Gastrocnemius medialis (tissue), 4 donors: ENCODE measurements at regions of chr13 and their contacts with region 1.

Region 1: GRCh38 chr13:79541426-79542049 is 60.6 kb downstream of the NDFIP2 start:
- DNase-seq: no peak
- ATAC-seq: no peak
- H3K4me3 ChIP-seq: no peak overlapping the region
- H3K27ac ChIP-seq: no peak overlapping the region
- H3K4me1 ChIP-seq: peaks cover 0 to 4% of the 10 kb centered on the region in 2 donors
- H3K27me3 ChIP-seq: no peaks in the 10 kb centered on the region
- CTCF ChIP-seq: peak; percentile 75 to 97 (median 82)
- POLR2A ChIP-seq: no peak

Region 2: GRCh38 chr13:77760893-77761292 is 1780.6 kb before region 1 on chr13:
- in situ Hi-C with region 1: no loop called
- intact Hi-C with region 1: no loop called
- DNase-seq: no peak
- ATAC-seq: no peak
- H3K4me3 ChIP-seq: no peak overlapping the region
- H3K27ac ChIP-seq: no peak overlapping the region
- H3K4me1 ChIP-seq: no peaks in the 10 kb centered on the region
- H3K27me3 ChIP-seq: no peaks in the 10 kb centered on the region
- CTCF ChIP-seq: no peak
- POLR2A ChIP-seq: no peak

Region 3: GRCh38 chr13:78137404-78138142 is 1404.0 kb before region 1 on chr13:
- in situ Hi-C with region 1: loop called in 1 of 4 experiments (anchors 25 kb)
- intact Hi-C with region 1: no loop called
- DNase-seq: no peak
- ATAC-seq: peak in 1 of 2 donors; percentile 68
- H3K4me3 ChIP-seq: no peak overlapping the region
- H3K27ac ChIP-seq: no peak overlapping the region
- H3K4me1 ChIP-seq: no peaks in the 10 kb centered on the region
- H3K27me3 ChIP-seq: no peaks in the 10 kb centered on the region
- CTCF ChIP-seq: peak in 4 of 5 experiments; percentile 10 to 63 (median 52)
- POLR2A ChIP-seq: no peak

Region 4: DNA sequence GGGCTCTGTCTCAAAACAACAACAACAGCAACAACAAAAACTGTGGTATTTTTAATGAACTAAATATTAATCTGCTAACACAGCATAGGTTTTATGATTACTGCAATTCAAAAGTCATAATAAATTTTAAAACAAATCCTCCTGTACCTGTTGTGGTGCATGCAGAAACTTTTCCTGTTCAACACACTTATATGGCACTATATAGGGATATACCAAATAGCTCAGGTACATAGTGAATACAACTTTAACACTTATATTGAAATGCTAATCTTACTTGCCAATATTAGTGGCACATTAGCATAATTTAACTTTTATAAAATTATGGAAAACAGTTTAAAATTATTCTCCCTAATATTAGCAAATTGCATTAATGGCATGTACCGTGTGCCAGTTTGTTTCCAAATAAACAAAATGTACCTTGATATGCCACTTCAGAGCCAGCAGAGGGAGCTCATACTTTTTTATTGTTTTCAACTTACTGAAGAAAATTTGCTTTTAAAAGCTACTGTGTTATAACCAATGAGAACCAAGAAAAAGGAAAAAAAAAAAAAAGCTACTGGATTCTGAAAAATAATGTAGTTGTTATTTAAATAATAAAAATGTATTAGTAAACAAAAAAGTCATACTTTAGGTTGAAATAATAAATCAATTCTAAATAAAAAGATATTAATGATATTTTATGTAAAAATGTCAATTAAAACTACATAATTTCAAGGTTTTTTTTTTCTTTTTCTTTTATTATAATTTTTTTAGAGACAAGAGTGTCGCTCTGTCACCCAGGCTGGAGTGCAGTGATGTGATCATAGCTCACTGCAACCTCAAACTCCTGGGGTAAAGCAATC is 117.5 kb before region 1 on chr13:
- in situ Hi-C with region 1: loop called (anchors 5 kb)
- intact Hi-C with region 1: loop called (anchors 1 kb)
- DNase-seq: no peak
- ATAC-seq: peak in 1 of 2 donors; percentile 56
- H3K4me3 ChIP-seq: no peak overlapping the region
- H3K27ac ChIP-seq: no peak overlapping the region
- H3K4me1 ChIP-seq: no peaks in the 10 kb centered on the region
- H3K27me3 ChIP-seq: no peaks in the 10 kb centered on the region
- CTCF ChIP-seq: peak; percentile 48 to 71 (median 69)
- POLR2A ChIP-seq: no peak

Region 5: GRCh38 chr13:79480954-79481684 is 60.4 kb before region 1 on chr13 and contains the start of gene NDFIP2:
- in situ Hi-C with region 1: no loop called
- intact Hi-C with region 1: loop called (anchors 5 kb)
- DNase-seq: peak; percentile 62 to 80
- ATAC-seq: peak; percentile 81 to 84
- H3K4me3 ChIP-seq: peak within 1 kb of the TSS; percentile 80 to 97 (median 86)
- H3K27ac ChIP-seq: peak within 1 kb of the TSS; percentile 80 to 88 (median 86)
- H3K4me1 ChIP-seq: peaks cover 48 to 49% of the 10 kb centered on the region in 2 donors
- H3K27me3 ChIP-seq: no peaks in the 10 kb centered on the region
- CTCF ChIP-seq: peak in 1 of 5 experiments; percentile 22
- POLR2A ChIP-seq: peak; percentile 54 to 70
- total RNA-seq, gene NDFIP2: 21.8 to 47.8 (median 31.9) TPM

Region 6: DNA sequence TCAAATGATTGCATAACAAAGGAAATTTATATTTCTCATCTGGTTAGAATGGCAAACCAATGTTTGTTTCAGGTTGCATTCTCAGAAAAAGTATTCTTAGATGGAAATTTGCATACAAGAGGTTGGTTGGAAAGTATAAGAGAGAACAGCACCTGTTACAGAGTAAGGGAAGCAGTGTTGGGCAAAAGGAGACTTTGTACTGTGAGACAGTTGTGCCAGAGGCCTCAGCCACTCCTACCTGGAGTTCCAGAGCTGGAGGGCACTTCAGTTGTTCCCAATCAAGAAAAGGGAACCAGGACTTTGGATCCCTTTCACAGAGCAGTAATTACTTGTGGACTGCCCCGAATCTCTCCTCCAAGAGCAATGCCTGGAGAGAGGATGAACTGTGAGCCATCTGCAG is 717.6 kb after region 1 on chr13:
- in situ Hi-C with region 1: no loop called
- intact Hi-C with region 1: no loop called
- DNase-seq: no peak
- ATAC-seq: no peak
- H3K4me3 ChIP-seq: no peak overlapping the region
- H3K27ac ChIP-seq: no peak overlapping the region
- H3K4me1 ChIP-seq: no peaks in the 10 kb centered on the region
- H3K27me3 ChIP-seq: no peaks in the 10 kb centered on the region
- CTCF ChIP-seq: no peak
- POLR2A ChIP-seq: no peak